GM10248 (cell line): ENCODE measurements at regions of chr21 and their contacts with region 1.

Region 1: GRCh38 chr21:25639551-25640201 is 618 bp downstream of the JAM2 start:
- DNase-seq: peak; percentile 83
- CTCF ChIP-seq: peak; percentile 52

Region 2: GRCh38 chr21:25626757-25627156 is 12.9 kb before region 1 on chr21:
- CTCF ChIA-PET with region 1: interaction called, 19 read pairs
- POLR2A ChIA-PET with region 1: no interaction called
- DNase-seq: no peak
- CTCF ChIP-seq: no peak